Calu3 (cell line): ENCODE measurements at regions of chr1 and their contacts with region 1.

Region 1: DNA sequence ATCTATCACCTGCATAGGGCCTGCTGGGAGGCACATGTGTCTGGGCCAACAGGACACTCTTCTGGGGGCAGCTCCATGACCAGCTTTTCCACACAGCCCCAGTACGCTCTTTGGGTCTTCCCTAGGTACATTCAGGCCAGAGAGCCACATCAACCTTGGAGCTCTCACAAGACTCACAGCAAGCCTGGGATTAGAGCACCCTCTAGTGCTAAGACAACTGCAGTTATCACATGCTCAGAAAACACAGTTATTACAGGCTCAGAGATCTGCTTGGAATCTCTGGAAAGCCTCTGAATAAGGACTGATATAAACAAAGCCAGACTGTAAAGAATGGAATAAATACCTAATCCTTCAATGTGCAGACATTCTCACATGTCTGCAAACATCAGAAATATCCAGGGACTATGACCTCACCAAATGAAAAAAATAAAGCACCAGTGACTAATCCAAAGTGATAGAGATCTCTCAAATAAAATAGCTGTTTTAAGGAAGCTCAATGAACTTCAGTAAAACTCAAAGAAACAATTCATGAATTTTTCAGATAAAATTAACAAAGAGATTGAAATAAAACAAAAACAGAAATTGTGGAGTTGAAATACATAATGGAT is 563.9 kb upstream of the NR5A2 start:
- DNase-seq: peak; percentile 77
- H3K4me3 Mint-ChIP-seq: no peak overlapping the region
- H3K27ac Mint-ChIP-seq: no peak overlapping the region
- H3K4me1 Mint-ChIP-seq: peaks cover 9% of the 10 kb centered on the region
- H3K27me3 Mint-ChIP-seq: no peaks in the 10 kb centered on the region
- CTCF ChIP-seq: peak; percentile 87

Region 2: GRCh38 chr1:198756470-198756869 is 707.2 kb before region 1 on chr1:
- CTCF ChIA-PET with region 1: interaction called, 8 read pairs
- intact Hi-C with region 1: loop called (anchors 1 kb)
- DNase-seq: no peak
- H3K4me3 Mint-ChIP-seq: no peak overlapping the region
- H3K27ac Mint-ChIP-seq: no peak overlapping the region
- H3K4me1 Mint-ChIP-seq: no peaks in the 10 kb centered on the region
- H3K27me3 Mint-ChIP-seq: no peaks in the 10 kb centered on the region
- CTCF ChIP-seq: no peak

Region 3: GRCh38 chr1:198937231-198938031 is 526.2 kb before region 1 on chr1:
- CTCF ChIA-PET with region 1: interaction called, 9 read pairs
- intact Hi-C with region 1: loop called (anchors 10 kb)
- DNase-seq: peak; percentile 66
- H3K4me3 Mint-ChIP-seq: no peak overlapping the region
- H3K27ac Mint-ChIP-seq: no peak overlapping the region
- H3K4me1 Mint-ChIP-seq: no peaks in the 10 kb centered on the region
- H3K27me3 Mint-ChIP-seq: no peaks in the 10 kb centered on the region
- CTCF ChIP-seq: no peak

Region 4: GRCh38 chr1:199243423-199244061 is 220.1 kb before region 1 on chr1:
- CTCF ChIA-PET with region 1: no interaction called
- intact Hi-C with region 1: loop called (anchors 5 kb)
- DNase-seq: peak; percentile 83
- H3K4me3 Mint-ChIP-seq: no peak overlapping the region
- H3K27ac Mint-ChIP-seq: no peak overlapping the region
- H3K4me1 Mint-ChIP-seq: peaks cover 38% of the 10 kb centered on the region
- H3K27me3 Mint-ChIP-seq: no peaks in the 10 kb centered on the region
- CTCF ChIP-seq: peak; percentile 69

Region 5: DNA sequence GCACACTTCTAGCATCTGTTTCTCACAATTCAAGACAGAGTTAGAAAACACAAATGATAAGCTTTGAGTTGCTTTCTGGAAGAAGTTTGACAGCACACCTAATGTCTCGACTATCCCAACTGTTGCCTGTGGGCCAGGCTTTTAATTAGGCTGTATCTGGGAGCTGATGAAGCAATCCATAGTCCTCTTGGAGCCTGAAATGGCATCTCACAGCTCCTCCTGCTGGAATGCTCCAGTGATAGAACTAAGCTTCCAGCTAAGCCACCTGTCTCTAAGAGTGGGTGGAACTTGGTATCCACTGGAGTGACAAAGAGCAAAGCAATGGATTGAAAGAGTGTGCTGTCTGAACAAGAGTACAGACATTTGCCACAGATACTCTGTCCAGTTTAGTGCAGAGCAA is 41.4 kb before region 1 on chr1:
- CTCF ChIA-PET with region 1: interaction called, 12 read pairs
- intact Hi-C with region 1: no loop called
- DNase-seq: peak; percentile 51
- H3K4me3 Mint-ChIP-seq: no peak overlapping the region
- H3K27ac Mint-ChIP-seq: no peak overlapping the region
- H3K4me1 Mint-ChIP-seq: no peaks in the 10 kb centered on the region
- H3K27me3 Mint-ChIP-seq: no peaks in the 10 kb centered on the region
- CTCF ChIP-seq: peak; percentile 59